ENCODE measurements at regions of chr1 and their contacts with region 1.

Region 1: GRCh38 chr1:13797397-13797796 is 97.4 kb downstream of the PRDM2 start:
- DNase-seq: no peak
- ATAC-seq: no peak
- H3K4me3 ChIP-seq: no peak overlapping the region
- H3K27ac ChIP-seq: no peak overlapping the region
- H3K4me1 ChIP-seq: peaks cover 22% of the 10 kb centered on the region
- H3K27me3 ChIP-seq: no peaks in the 10 kb centered on the region
- CTCF ChIP-seq: no peak

Region 2: DNA sequence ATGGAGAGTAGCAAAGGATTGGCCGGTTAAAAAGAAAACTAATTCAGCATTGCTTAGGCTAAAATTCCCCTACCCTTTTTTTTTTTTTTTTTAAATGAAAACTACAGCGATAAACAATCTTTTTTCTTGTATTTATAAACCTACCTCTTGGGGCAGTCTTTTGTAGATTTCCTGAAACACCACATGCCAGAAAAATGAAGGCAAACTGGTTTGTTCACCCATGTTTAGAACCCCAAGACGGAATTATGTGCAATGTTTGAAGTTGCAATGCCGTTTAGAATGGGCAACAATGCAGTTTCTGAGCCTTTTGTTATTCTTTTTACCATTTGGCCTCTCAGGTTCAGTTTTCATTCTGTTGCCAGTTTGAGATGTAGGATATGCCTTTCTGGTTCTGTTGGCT is 38.3 kb before region 1 on chr1:
- CTCF ChIA-PET with region 1: interaction called, 10 read pairs
- POLR2A ChIA-PET with region 1: no interaction called
- intact Hi-C with region 1: no loop called
- DNase-seq: peak; percentile 95
- ATAC-seq: peak; percentile 51
- H3K4me3 ChIP-seq: peak overlapping the region; percentile 41; the same call in 1 of the 2 replicates
- H3K27ac ChIP-seq: peak overlapping the region; percentile 29
- H3K4me1 ChIP-seq: peaks cover 50% of the 10 kb centered on the region
- H3K27me3 ChIP-seq: no peaks in the 10 kb centered on the region
- CTCF ChIP-seq: peak; percentile 45

Region 3: DNA sequence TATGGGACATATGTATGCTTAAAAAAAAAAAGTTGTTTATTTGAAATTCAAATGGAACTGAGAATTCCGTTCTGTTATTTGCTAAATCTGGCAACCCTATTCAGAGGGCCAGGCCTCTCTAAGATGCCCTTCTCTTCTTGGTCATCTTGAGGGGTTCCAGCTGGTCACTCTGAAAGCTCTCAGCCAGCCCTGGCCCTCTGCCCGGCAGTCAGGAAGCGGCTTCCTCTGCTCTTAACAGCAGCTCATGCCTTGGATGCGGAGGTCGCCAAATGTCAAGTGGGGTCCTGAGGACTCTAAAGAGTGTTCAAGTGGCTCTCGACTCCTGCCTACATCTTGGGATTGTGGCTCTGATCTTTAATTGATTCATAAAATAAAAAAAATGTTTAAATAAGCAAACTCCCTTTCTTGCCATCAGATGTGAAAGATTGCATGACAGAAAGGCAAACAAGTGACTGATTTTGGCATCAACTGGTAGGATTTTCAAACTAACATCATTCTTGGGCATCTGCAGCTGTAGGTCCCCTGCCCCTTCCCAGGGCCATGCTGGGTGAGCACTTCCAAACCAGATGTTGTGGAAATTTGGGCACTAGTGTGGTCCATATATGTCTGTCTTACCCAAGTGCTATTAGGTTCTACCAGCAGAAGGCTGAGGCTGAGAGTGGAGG is 33.4 kb after region 1 on chr1:
- CTCF ChIA-PET with region 1: no interaction called
- POLR2A ChIA-PET with region 1: no interaction called
- intact Hi-C with region 1: no loop called
- DNase-seq: no peak
- ATAC-seq: no peak
- H3K4me3 ChIP-seq: no peak overlapping the region
- H3K27ac ChIP-seq: no peak overlapping the region
- H3K4me1 ChIP-seq: peaks cover 7% of the 10 kb centered on the region
- H3K27me3 ChIP-seq: no peaks in the 10 kb centered on the region
- CTCF ChIP-seq: no peak

Region 4: GRCh38 chr1:13881410-13882025 is 84.1 kb after region 1 on chr1:
- CTCF ChIA-PET with region 1: no interaction called
- POLR2A ChIA-PET with region 1: no interaction called
- intact Hi-C with region 1: no loop called
- DNase-seq: peak; percentile 48
- ATAC-seq: no peak
- H3K4me3 ChIP-seq: no peak overlapping the region
- H3K27ac ChIP-seq: no peak overlapping the region
- H3K4me1 ChIP-seq: no peaks in the 10 kb centered on the region
- H3K27me3 ChIP-seq: peaks cover 49% of the 10 kb centered on the region
- CTCF ChIP-seq: no peak